GM10248 (cell line): ENCODE measurements at regions of chrX and their contacts with region 1.

Region 1: GRCh38 chrX:22135994-22136684 is 104.0 kb downstream of the PHEX start:
- DNase-seq: peak; percentile 25
- CTCF ChIP-seq: peak; percentile 31

Region 2: DNA sequence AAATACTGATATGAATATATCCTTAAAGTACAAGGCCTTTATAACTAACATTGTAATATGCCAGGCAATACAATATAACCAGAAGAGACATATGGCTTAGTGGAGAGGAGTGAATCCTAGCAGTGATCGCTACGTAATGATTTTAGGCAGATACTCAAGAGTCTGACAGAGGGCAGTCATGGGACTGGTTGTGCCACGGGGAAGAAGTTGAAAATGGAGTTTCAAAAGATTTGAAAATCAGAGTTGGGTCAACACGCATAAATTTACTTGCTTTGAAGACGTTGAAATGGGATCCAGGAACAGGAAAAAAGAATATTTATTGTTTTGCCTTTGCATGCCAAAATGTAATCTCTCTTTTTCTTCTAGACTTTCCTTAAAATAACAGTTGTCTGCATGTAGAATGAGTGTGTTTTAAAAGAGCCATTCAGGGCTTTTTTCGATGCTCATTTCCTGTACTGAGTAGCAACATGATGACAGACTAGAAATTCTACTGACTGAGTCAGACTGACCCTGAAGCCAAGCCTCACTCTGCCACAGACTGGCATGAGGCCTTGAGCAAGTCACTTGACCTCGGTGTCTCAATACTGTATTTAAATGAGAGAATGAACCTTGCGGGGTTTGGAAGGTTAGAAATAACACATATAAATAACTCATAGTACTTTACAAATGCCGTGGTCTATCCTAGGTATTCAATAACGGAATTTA is 203.7 kb before region 1 on chrX:
- CTCF ChIA-PET with region 1: no interaction called
- POLR2A ChIA-PET with region 1: no interaction called
- DNase-seq: no peak
- CTCF ChIP-seq: no peak

Region 3: GRCh38 chrX:22069586-22069985 is 66.6 kb before region 1 on chrX:
- CTCF ChIA-PET with region 1: no interaction called
- POLR2A ChIA-PET with region 1: no interaction called
- DNase-seq: no peak
- CTCF ChIP-seq: no peak

Region 4: GRCh38 chrX:22121171-22121570 is 15.0 kb before region 1 on chrX:
- CTCF ChIA-PET with region 1: interaction called, 10 read pairs
- POLR2A ChIA-PET with region 1: no interaction called
- DNase-seq: no peak
- CTCF ChIP-seq: no peak